ENCODE measurements at regions of chr16 and their contacts with region 1.

Region 1: GRCh38 chr16:1763521-1764511 is 7.5 kb downstream of the NME3 start:
- DNase-seq: no peak
- ATAC-seq: peak in 1 of 2 donors; percentile 15
- H3K4me3 ChIP-seq: no peak overlapping the region
- H3K27ac ChIP-seq: no peak overlapping the region
- H3K4me1 ChIP-seq: no peaks in the 10 kb centered on the region
- H3K27me3 ChIP-seq: no peaks in the 10 kb centered on the region
- CTCF ChIP-seq: peak in 1 of 5 experiments; percentile 18
- POLR2A ChIP-seq: no peak

Region 2: DNA sequence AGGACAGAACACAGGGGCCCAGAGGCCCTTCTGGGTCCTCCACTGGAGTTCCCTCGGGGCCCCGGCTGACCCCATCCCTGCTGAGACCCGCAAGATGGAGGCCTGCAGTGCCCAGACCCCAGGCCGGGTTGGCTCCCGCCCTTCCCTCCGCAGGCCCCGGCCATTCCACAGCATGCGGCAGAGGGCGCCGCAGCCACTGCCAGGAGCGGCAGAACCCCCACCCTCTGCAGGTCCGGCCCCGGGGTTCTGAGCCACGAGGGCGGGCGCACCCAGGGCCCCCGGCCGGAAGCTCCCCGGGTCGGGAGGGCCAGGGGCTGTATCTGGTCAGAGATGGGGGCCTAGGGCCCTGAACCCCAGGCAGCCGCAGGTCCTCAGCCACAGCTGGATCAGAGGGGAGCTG is 335.3 kb before region 1 on chr16:
- in situ Hi-C with region 1: no loop called
- intact Hi-C with region 1: loop called (anchors 5 kb)
- DNase-seq: no peak
- ATAC-seq: no peak
- H3K4me3 ChIP-seq: no peak overlapping the region
- H3K27ac ChIP-seq: no peak overlapping the region
- H3K4me1 ChIP-seq: no peaks in the 10 kb centered on the region
- H3K27me3 ChIP-seq: no peaks in the 10 kb centered on the region
- CTCF ChIP-seq: peak in 2 of 5 experiments; percentile 19 to 33
- POLR2A ChIP-seq: no peak

Region 3: GRCh38 chr16:1863681-1864460 is 100.1 kb after region 1 on chr16:
- in situ Hi-C with region 1: no loop called
- intact Hi-C with region 1: no loop called
- DNase-seq: no peak
- ATAC-seq: no peak
- H3K4me3 ChIP-seq: no peak overlapping the region
- H3K27ac ChIP-seq: no peak overlapping the region
- H3K4me1 ChIP-seq: peaks cover 0 to 4% of the 10 kb centered on the region in 2 donors
- H3K27me3 ChIP-seq: peaks cover 14 to 30% (median 30%) of the 10 kb centered on the region in 3 donors
- CTCF ChIP-seq: peak in 3 of 5 experiments; percentile 48 to 69 (median 57)
- POLR2A ChIP-seq: no peak